Activated T-helper 2 cell treated with anti-CD3 and anti-CD28 coated beads, Interferon-gamma antibody, Interleukin-2, Interleukin-4, amounts not matched to agents 10 μg/mL and 5 μg/mL and 100 μg/mL, durations not matched to agents 14 hours and 24 hours and 36 hours (primary cell): ENCODE measurements at regions of chr21 and their contacts with region 1.

Region 1: GRCh38 chr21:28745131-28746016 is 247.3 kb downstream of the LTN1 start:
- DNase-seq: peak; percentile 55
- H3K4me3 Mint-ChIP-seq: no peak overlapping the region
- H3K27ac Mint-ChIP-seq: no peak overlapping the region
- H3K4me1 Mint-ChIP-seq: no peaks in the 10 kb centered on the region
- H3K27me3 Mint-ChIP-seq: no peaks in the 10 kb centered on the region

Region 2: GRCh38 chr21:28805885-28806284 is 60.5 kb after region 1 on chr21:
- intact Hi-C with region 1: no loop called
- DNase-seq: no peak
- H3K4me3 Mint-ChIP-seq: no peak overlapping the region
- H3K27ac Mint-ChIP-seq: no peak overlapping the region
- H3K4me1 Mint-ChIP-seq: no peaks in the 10 kb centered on the region
- H3K27me3 Mint-ChIP-seq: peaks cover 3% of the 10 kb centered on the region

Region 3: DNA sequence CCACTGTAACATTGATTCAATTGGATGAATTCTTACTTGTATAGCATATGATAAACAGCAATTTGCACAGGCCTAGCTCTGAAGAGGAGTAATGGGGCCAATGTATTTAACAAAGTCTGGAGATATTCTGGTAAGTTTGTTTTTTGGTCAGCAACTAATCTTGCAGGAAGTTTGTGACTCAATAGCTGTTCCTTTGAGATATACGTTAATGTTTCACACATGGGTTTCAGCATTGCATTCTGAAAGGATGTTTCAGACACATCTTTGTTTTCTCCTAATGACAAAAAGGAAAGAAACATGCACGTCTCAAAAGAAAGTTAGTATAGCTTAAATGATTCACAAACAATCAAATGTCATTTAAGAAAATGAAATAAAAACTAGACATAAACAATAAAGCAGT is 198.3 kb after region 1 on chr21:
- intact Hi-C with region 1: loop called (anchors 1 kb)
- DNase-seq: no peak
- H3K4me3 Mint-ChIP-seq: no peak overlapping the region
- H3K27ac Mint-ChIP-seq: no peak overlapping the region
- H3K4me1 Mint-ChIP-seq: no peaks in the 10 kb centered on the region
- H3K27me3 Mint-ChIP-seq: no peaks in the 10 kb centered on the region